CD14-positive monocyte (primary cell): ENCODE measurements at regions of chr4 and their contacts with region 1.

Region 1: GRCh38 chr4:139603576-139604387 is 47.8 kb upstream of the SETD7 start:
- DNase-seq: peak; percentile 36 to 57 (median 42)
- H3K4me3 ChIP-seq: no peak overlapping the region
- H3K4me3 Mint-ChIP-seq: no peak overlapping the region
- H3K27ac ChIP-seq: no peak overlapping the region
- H3K27ac Mint-ChIP-seq: no peak overlapping the region
- H3K4me1 ChIP-seq: peaks cover 11 to 13% of the 10 kb centered on the region in 2 donors
- H3K4me1 Mint-ChIP-seq: peaks cover 14% of the 10 kb centered on the region
- H3K27me3 ChIP-seq: no peaks in the 10 kb centered on the region
- H3K27me3 Mint-ChIP-seq: peaks cover 4 to 8% (median 6%) of the 10 kb centered on the region in 3 donors
- CTCF ChIP-seq: peak; percentile 75

Region 2: GRCh38 chr4:138802499-138802898 is 801.3 kb before region 1 on chr4:
- intact Hi-C with region 1: no loop called
- DNase-seq: no peak
- H3K4me3 ChIP-seq: no peak overlapping the region
- H3K4me3 Mint-ChIP-seq: no peak overlapping the region
- H3K27ac ChIP-seq: no peak overlapping the region
- H3K27ac Mint-ChIP-seq: no peak overlapping the region
- H3K4me1 ChIP-seq: no peaks in the 10 kb centered on the region
- H3K4me1 Mint-ChIP-seq: no peaks in the 10 kb centered on the region
- H3K27me3 ChIP-seq: peaks cover 20 to 23% of the 10 kb centered on the region in 2 donors
- H3K27me3 Mint-ChIP-seq: peaks cover 23 to 38% (median 30%) of the 10 kb centered on the region in 3 donors
- CTCF ChIP-seq: no peak

Region 3: GRCh38 chr4:139651282-139652194 is 47.8 kb after region 1 on chr4:
- intact Hi-C with region 1: loop called in 1 of 2 experiments (anchors 10 kb)
- DNase-seq: peak; percentile 65 to 70 (median 68)
- H3K4me3 ChIP-seq: no peak overlapping the region
- H3K4me3 Mint-ChIP-seq: peak overlapping the region; percentile 27 to 47
- H3K27ac ChIP-seq: no peak overlapping the region
- H3K27ac Mint-ChIP-seq: peak overlapping the region in 1 of 7 donors; percentile 3
- H3K4me1 ChIP-seq: peaks cover 10 to 14% of the 10 kb centered on the region in 2 donors
- H3K4me1 Mint-ChIP-seq: peaks cover 16% of the 10 kb centered on the region
- H3K27me3 ChIP-seq: no peaks in the 10 kb centered on the region
- H3K27me3 Mint-ChIP-seq: peaks cover 0 to 5% (median 0%) of the 10 kb centered on the region in 3 donors
- CTCF ChIP-seq: peak; percentile 93